ENCODE measurements at regions of chr13 and their contacts with region 1.

Region 1: DNA sequence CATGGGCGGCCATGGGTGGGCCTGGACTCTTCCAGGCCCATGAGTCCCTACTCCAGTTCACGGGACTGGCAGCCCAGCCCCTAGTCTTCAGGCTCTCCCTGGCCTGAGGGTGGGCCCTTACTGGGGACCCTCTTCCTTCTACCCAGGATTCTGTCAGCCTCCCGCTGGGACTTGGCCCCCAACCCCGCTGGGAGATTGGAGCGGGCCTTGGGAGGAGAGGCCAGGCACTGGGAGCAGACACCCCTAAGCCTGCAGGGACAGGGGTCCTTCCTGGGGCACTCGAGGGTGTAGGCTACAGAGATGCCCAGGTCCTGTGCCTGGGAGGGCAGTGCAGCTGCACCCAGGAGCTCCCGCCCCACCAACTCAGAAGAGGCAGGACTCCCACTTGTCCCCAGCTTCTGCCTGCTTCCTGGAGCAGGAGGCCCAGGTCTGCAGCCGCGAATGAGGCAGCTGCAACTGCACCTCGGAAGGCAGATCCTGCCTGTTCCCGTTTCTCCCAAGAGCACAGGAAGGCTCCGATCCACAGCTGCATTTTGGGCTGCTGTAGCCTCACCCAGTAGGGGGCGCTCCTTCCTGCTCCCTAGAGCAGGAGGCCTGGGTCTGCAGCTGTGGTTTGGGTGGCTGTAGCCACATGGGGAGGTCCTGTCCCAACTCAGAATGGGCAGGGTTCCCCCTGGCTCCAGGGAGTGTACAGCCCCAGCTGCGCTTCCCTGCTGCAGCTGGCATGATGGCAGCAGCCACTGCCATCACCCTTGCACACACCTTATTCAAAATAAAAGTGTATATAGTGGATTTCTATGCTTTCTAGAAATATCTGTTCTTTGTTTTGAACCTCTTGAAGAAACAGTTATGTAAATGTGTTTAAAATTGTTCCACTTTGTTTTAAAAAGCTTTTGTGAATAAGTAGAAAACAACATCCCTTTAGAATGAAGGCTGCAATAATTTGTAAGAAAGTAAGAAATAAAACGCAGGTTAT is 46.8 kb downstream of the TEX26 start:
- DNase-seq: peak; percentile 35
- CTCF ChIP-seq: peak; percentile 84

Region 2: DNA sequence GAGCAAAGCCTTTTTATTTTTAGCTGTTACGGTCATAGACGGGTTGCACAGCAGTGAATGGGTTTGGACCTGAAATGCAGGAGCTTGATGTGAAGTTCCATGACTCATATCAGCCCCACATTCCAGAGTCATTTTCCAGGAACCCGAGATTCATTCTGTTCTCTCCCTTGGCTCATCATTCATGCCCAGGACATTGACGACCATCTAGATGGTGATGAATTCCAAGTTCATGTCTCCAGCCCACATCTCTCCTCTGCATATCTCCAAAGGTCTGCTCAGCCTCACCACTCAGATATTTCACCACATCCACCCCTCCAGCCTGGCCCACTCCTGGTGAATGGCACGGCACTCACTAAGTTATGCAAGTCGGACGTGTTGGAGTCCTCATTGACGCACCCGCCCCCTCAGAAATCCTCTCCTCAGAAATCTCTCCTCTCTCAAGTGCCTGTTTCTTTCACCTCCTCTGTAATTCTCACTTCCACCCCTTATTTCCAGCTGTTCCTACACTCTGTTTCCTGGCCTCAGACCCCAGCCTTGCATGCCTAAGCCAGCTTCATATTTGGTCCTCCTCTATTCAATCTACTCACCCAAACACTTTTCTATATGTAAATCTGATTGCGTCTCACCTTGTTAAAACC is 160.8 kb before region 1 on chr13:
- CTCF ChIA-PET with region 1: no interaction called
- POLR2A ChIA-PET with region 1: no interaction called
- DNase-seq: no peak
- CTCF ChIP-seq: no peak

Region 3: DNA sequence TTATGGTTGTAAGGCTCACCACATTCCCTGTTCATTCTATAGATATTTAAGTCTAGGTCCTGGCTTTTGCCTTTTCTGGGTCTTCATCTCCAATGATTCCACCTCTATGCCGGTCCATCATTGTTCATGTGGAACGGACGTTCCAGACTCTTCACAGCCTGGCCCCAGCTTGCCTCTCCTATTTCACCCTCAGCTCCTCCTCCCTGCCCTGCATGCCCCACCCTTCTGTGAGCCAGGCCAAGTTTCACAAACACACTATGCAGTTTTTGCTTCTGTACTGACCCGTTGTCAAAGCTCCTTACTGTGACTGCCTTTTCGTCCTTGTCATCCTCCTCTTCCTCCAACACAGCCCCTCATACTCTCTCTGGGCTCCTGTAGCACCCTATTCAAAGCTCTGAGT is 15.5 kb before region 1 on chr13:
- CTCF ChIA-PET with region 1: interaction called, 33 read pairs
- POLR2A ChIA-PET with region 1: no interaction called
- DNase-seq: no peak
- CTCF ChIP-seq: no peak

Region 4: DNA sequence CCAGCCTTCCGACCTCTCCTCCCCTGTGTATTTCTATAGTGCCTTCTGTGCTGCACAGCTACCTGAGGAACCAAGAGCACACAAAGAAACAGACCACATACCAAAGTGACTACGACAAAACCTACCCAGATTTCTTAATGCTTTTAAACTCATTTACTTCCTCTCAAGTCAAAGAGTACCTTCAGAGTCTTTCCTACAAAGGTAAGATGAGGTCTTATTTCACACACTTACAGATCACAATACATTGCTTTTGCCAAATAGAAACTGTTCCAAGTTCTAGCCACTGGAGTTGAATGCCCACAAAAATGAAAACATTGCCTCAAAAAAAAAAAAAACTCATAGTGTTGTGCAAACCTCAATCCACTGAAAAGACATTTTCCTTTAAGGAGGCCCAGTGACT is 10.4 kb before region 1 on chr13:
- CTCF ChIA-PET with region 1: interaction called, 33 read pairs
- POLR2A ChIA-PET with region 1: no interaction called
- DNase-seq: no peak
- CTCF ChIP-seq: no peak